ENCODE measurements at regions of chr3 and their contacts with region 1.

Region 1: DNA sequence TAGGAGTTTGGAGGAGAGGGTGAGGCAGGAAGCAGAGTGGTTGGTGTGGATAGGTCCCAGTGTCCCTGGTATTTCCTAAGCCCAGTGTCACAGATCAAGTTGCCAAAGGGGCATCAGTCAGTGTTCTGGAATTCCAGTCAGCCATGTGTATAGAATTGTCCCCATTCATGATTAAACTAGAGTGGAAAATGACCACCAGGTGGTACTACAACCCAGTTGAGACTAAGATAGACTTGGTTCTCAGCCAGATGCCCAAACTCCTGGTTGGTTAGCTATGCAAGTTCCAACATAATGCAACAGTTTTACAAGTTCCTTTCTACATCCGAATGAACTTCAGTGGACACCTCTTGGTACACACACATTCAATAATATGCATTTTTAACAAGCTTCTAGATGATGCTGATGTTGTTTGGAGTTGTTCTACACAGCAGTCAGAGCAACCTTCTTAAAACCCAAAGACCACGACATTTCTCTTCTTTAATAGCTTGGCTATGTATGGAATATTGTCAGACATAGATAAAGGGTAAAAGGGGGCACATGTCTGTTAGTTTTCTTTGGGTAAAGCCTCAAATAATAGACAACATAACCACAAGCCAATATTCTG is 8.4 kb upstream of the ATR start:
- DNase-seq: peak; percentile 81
- H3K4me3 ChIP-seq: no peak overlapping the region
- H3K27ac ChIP-seq: no peak overlapping the region
- H3K4me1 ChIP-seq: no peaks in the 10 kb centered on the region
- H3K27me3 ChIP-seq: no peaks in the 10 kb centered on the region
- CTCF ChIP-seq: peak; percentile 63

Region 2: GRCh38 chr3:142680710-142681109 is 93.8 kb after region 1 on chr3:
- CTCF ChIA-PET with region 1: interaction called, 3 read pairs
- POLR2A ChIA-PET with region 1: no interaction called
- intact Hi-C with region 1: loop called (anchors 10 kb)
- DNase-seq: no peak
- H3K4me3 ChIP-seq: no peak overlapping the region
- H3K27ac ChIP-seq: no peak overlapping the region
- H3K4me1 ChIP-seq: no peaks in the 10 kb centered on the region
- H3K27me3 ChIP-seq: no peaks in the 10 kb centered on the region
- CTCF ChIP-seq: peak; percentile 27; the same call in 1 of the 2 replicates

Region 3: GRCh38 chr3:142993958-142994442 is 407.1 kb after region 1 on chr3:
- CTCF ChIA-PET with region 1: interaction called, 3 read pairs
- POLR2A ChIA-PET with region 1: no interaction called
- intact Hi-C with region 1: loop called (anchors 2 kb)
- DNase-seq: peak; percentile 79
- H3K4me3 ChIP-seq: no peak overlapping the region
- H3K27ac ChIP-seq: no peak overlapping the region
- H3K4me1 ChIP-seq: no peaks in the 10 kb centered on the region
- H3K27me3 ChIP-seq: no peaks in the 10 kb centered on the region
- CTCF ChIP-seq: peak; percentile 78

Region 4: DNA sequence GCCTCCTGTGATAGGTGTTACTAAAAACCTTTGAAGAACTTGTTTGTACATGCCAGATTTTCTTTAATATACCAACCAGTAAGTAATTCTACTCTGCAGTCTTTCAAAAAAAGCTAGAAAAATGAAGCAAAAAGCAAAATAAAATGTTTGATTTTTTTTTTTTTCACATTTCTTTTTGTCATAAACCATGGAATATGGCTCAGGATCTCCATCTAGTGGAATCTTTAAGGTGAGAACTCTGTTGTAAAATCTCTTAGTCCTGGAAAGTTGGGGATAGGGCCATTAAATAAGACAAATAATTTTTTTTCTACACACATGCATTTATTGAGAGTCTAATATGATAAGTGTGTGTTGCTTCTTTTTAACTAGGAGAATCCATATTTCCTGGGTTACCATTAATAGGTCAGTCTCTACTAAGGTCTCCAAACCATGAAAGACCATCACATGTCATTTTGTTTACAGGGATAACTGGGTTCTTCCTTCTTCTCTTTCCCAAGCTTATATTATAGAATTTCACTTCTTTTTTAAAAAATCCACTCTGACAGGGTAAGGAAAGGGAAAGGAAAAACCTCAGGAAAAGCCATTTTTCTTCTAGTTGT is 1176.8 kb after region 1 on chr3:
- CTCF ChIA-PET with region 1: no interaction called
- POLR2A ChIA-PET with region 1: no interaction called
- intact Hi-C with region 1: loop called (anchors 10 kb)
- DNase-seq: no peak
- H3K4me3 ChIP-seq: no peak overlapping the region
- H3K27ac ChIP-seq: no peak overlapping the region
- H3K4me1 ChIP-seq: no peaks in the 10 kb centered on the region
- H3K27me3 ChIP-seq: no peaks in the 10 kb centered on the region
- CTCF ChIP-seq: peak; percentile 53; the same call in 1 of the 2 replicates